Dorsolateral prefrontal cortex (tissue), 120 donors: ENCODE measurements at regions of chr13 and their contacts with region 1.

Region 1: GRCh38 chr13:111046590-111047141 is 68.4 kb upstream of the ARHGEF7 start:
- DNase-seq: no peak
- H3K4me3 ChIP-seq: no peak overlapping the region
- H3K27ac ChIP-seq: peak overlapping the region in 7 of 59 donors; percentile 11 to 42 (median 28)
- H3K27me3 ChIP-seq: no peaks in the 10 kb centered on the region
- CTCF ChIP-seq: peak in 10 of 56 donors; percentile 8 to 20 (median 14)

Region 2: DNA sequence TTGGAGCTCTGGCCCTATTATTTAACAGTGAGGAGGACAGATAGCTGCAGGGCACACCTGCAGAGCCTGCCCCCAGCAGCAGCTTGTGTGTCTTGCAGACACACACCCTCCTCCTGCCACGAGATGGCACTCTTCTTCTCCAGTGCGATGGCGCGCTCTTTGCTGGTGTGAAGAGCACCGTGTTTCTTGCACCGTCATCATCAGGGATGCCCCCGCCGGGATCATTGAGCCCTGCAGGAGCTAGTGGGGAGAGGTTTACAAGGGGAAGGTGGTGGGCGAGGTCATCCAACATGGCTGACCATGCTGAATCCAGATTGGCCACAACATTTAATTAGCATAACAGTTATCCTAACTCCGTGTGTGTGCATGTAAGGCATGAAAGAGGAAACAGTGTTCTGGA is 590.7 kb before region 1 on chr13:
- intact Hi-C with region 1: loop called in 1 of 2 experiments (anchors 10 kb)
- DNase-seq: peak; percentile 48 to 88 (median 80)
- H3K4me3 ChIP-seq: peak overlapping the region in 44 of 59 donors; percentile 7 to 56 (median 36)
- H3K27ac ChIP-seq: no peak overlapping the region
- H3K27me3 ChIP-seq: no peaks in the 10 kb centered on the region
- CTCF ChIP-seq: peak; percentile 54 to 94 (median 82)

Region 3: DNA sequence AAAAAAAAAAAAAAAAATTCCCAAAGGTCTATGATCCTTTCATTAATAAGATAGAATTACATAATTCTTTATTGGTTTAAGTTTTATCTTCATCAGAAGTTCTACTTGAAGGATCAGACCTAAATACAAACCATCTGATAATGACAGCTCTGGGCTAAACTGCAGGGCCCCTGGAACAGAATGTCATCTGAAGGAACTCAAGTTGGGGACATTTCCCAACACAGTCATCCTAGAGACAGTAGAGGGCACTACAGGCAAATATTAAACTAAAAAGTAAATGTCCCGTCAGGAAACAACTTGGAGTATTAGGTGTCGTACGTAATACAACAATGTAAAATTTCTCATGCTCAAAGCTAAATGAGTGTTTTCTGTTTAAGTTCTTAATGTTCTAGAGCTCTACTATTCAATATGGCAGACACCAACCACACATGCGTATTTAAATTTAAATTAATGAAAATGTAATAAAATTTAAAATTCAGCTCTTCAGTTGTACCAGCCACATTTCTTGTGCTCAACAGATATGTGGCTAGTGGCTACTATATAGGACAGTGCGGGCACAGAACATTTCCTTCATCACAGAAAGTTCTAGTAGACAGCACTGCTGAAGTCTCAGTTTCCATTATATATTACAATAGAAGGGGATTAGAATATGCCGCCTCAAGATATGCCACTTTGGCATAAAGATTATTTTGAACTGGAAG is 453.1 kb before region 1 on chr13:
- intact Hi-C with region 1: loop called in 1 of 2 experiments (anchors 5 kb)
- DNase-seq: no peak
- H3K4me3 ChIP-seq: no peak overlapping the region
- H3K27ac ChIP-seq: no peak overlapping the region
- H3K27me3 ChIP-seq: no peaks in the 10 kb centered on the region
- CTCF ChIP-seq: peak in 55 of 56 donors; percentile 29 to 81 (median 63)

Region 4: GRCh38 chr13:110856942-110857835 is 189.5 kb before region 1 on chr13:
- intact Hi-C with region 1: no loop called
- DNase-seq: no peak
- H3K4me3 ChIP-seq: no peak overlapping the region
- H3K27ac ChIP-seq: no peak overlapping the region
- H3K27me3 ChIP-seq: no peaks in the 10 kb centered on the region
- CTCF ChIP-seq: no peak

Region 5: GRCh38 chr13:111597051-111598017 is 550.7 kb after region 1 on chr13:
- intact Hi-C with region 1: no loop called
- DNase-seq: no peak
- H3K4me3 ChIP-seq: no peak overlapping the region
- H3K27ac ChIP-seq: no peak overlapping the region
- H3K27me3 ChIP-seq: peaks cover 0 to 4% (median 0%) of the 10 kb centered on the region in 45 donors
- CTCF ChIP-seq: no peak